ENCODE measurements at regions of chrX and their contacts with region 1.

Region 1: GRCh38 chrX:39043838-39044550 is 242.7 kb downstream of the MID1IP1 start:
- DNase-seq: no peak
- H3K4me3 ChIP-seq: no peak overlapping the region
- H3K4me3 Mint-ChIP-seq: no peak overlapping the region
- H3K27ac Mint-ChIP-seq: no peak overlapping the region
- H3K4me1 ChIP-seq: peaks cover 7% of the 10 kb centered on the region; the same call in 1 of the 2 replicates
- H3K4me1 Mint-ChIP-seq: no peaks in the 10 kb centered on the region
- H3K27me3 ChIP-seq: no peaks in the 10 kb centered on the region
- H3K27me3 Mint-ChIP-seq: no peaks in the 10 kb centered on the region
- CTCF ChIP-seq: no peak

Region 2: GRCh38 chrX:39017081-39017480 is 26.9 kb before region 1 on chrX:
- CTCF ChIA-PET with region 1: no interaction called
- POLR2A ChIA-PET with region 1: no interaction called
- intact Hi-C with region 1: loop called (anchors 1 kb)
- DNase-seq: no peak
- H3K4me3 ChIP-seq: no peak overlapping the region
- H3K4me3 Mint-ChIP-seq: peak overlapping the region; percentile 46
- H3K27ac Mint-ChIP-seq: peak overlapping the region; percentile 65
- H3K4me1 ChIP-seq: peaks cover 34% of the 10 kb centered on the region
- H3K4me1 Mint-ChIP-seq: peaks cover 18% of the 10 kb centered on the region
- H3K27me3 ChIP-seq: no peaks in the 10 kb centered on the region
- H3K27me3 Mint-ChIP-seq: no peaks in the 10 kb centered on the region
- CTCF ChIP-seq: no peak

Region 3: DNA sequence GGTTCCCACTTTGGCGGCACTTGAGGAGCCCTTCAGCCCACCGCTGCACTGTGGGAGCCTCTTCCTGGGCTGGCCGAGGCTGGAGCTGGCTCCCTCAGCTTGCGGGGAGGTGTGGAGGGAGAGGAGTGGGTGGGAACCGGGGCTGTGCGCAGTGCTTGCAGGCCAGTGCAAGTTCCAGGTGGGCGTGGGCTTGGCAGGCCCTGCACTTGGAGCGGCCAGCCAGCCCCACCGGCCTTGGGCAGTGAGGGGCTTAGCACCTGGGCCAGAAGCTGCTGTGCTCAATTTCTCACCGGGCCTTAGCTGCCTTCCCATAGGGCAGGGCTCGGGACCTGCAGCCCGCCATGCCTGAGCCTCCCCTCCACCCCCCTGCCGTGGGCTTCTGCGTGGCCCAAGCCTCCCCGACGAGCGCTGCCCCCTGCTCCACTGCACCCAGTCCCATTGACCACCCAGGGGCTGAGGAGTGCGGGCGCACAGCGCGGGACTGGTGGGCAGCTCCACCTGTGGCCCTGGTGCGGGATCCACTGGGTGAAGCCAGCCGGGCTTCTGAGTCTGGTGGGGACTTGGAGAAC is 231.6 kb after region 1 on chrX:
- CTCF ChIA-PET with region 1: no interaction called
- POLR2A ChIA-PET with region 1: no interaction called
- intact Hi-C with region 1: no loop called
- DNase-seq: no peak
- H3K4me3 ChIP-seq: no peak overlapping the region
- H3K4me3 Mint-ChIP-seq: no peak overlapping the region
- H3K27ac Mint-ChIP-seq: no peak overlapping the region
- H3K4me1 ChIP-seq: no peaks in the 10 kb centered on the region
- H3K4me1 Mint-ChIP-seq: no peaks in the 10 kb centered on the region
- H3K27me3 ChIP-seq: no peaks in the 10 kb centered on the region
- H3K27me3 Mint-ChIP-seq: no peaks in the 10 kb centered on the region
- CTCF ChIP-seq: no peak

Measured in Caco-2 (cell line).